ENCODE measurements at regions of chr22 and their contacts with region 1.

Region 1: DNA sequence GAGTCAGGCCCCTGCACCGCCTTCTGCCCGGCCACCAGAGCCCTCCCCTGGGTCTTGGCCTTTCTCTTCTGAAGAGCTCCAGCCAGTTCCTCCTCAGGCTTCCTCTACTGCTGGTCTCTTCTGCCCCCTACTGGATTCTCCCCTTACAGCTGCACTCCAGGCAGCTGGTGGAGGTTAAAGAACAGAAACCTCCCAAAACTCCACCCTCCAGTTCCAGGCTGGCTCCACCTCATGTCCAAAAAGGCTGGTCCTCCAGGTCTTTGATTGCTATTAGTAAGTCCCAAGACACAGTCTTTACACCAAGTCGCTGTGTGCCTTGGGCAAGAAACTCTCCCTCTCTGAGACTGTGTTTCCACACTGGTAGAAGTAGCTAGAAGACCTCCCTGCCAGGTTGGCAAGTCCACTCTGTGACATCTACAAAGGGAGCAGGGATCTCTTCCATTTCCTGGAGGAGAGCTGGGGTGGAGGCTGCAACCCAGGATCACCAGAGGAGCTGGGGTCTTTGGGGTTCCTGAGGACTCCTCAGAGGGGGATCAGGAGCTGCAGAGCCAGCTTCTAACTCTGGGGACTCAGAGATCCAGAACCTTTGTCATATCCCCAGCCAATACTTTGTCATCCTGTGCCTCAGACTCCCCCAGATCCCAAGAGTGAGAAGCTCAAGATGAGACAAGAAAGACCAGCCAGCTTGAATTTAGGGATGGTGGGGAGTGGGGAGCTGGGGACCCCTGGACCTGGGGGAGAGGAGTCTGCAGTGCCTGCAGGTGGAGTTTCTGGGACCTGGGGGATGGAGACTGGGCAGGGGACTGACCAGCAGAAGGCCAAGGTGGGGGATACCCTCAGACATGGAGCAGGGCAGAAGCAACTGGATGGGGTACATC is 3.4 kb upstream of the IGLL5 start:
- H3K4me3 ChIP-seq: no peak overlapping the region
- H3K27ac ChIP-seq: no peak overlapping the region
- H3K4me1 ChIP-seq: no peaks in the 10 kb centered on the region
- CTCF ChIP-seq: peak; percentile 48

Region 2: DNA sequence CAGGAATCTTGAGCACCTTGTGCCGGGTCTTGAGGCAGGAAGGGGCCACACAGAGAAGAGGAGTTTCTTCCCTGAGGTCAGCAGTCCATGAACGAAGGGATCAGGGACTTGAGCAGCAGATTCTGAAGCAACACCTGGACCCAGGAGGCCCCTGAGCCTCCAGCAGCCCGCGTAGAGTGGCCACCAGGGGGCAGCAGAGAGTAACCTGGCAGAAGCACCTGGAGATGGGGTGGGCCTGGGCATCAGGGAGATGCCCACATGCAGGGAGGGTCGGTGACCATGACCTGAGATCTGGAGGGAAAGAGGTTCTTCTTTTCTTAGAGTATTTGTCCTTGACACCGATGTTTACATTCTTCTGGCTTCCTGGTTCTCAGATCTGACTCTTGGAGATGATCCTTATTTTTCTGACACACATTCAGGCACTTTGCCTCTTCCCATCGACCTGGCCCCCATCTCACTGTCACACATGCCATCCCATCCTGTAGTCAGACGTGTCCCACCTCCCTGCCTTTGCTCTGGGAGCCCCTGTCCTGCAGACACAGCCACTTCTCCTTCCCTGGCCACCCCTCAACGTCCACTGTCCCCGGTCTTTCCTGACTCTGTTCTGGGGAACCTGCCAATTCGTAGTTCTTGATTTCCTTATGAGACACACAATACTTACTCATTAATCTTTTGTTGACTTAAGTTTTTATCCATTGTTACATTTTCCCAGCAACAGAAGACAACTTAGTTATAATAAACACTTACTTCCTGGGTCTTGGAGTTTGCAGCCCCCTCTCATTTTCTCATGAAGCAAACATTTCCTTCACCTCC is 173.3 kb before region 1 on chr22:
- CTCF ChIA-PET with region 1: interaction called, 29 read pairs
- POLR2A ChIA-PET with region 1: no interaction called
- H3K4me3 ChIP-seq: no peak overlapping the region
- H3K27ac ChIP-seq: no peak overlapping the region
- H3K4me1 ChIP-seq: no peaks in the 10 kb centered on the region
- CTCF ChIP-seq: peak; percentile 56; the same call in 1 of the 2 replicates

Region 3: DNA sequence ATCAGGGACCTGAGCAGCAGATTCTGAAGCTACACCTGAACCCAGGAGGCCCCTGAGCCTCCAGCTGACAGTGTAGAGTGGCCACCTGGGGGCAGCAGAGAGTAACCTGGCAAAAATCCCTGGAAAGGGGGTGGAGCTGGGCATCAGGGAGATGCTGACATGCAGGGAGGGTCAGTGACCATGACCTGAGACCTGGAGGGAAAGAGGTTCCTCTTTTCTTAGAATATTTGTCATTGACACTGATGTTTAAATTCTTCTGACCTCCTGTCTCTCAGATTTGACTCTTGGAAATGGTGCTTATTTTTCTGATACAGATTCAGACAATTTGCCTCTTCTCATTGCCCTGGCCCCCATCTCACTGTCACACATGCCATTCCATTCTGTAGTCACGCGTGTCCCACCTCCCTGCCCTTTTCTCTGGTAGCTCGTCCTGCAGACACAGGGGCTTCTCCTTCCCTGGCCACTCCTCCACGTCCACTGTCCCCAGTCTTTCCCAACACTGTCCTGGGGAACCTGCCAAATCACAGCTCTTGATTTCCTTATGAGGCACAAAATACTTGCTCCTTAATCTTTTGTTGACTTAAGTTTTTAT is 113.9 kb before region 1 on chr22:
- CTCF ChIA-PET with region 1: interaction called, 77 read pairs
- POLR2A ChIA-PET with region 1: interaction called, 3 read pairs
- H3K4me3 ChIP-seq: no peak overlapping the region
- H3K27ac ChIP-seq: no peak overlapping the region
- H3K4me1 ChIP-seq: no peaks in the 10 kb centered on the region
- CTCF ChIP-seq: peak; percentile 56

Region 4: DNA sequence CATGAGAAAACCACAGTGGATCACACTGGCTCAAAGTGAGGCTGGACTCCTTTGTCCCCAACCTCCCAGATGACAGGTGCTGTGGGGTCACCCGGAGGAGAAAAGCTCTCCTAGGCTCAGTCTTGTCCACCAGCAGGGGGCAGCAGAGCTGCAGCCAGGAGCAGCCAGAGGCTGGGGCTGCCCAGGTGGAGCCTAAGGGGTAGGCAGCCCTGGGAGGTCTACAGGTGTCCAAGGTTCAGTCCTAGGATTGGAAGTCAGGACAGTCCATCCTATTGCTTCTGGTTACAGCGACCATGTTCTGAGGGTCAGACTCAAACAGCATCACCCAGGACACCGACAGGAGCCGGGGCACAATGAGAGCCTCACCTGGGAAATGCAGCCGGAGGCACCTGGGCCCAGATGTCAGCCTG is 74.2 kb before region 1 on chr22:
- CTCF ChIA-PET with region 1: interaction called, 29 read pairs
- POLR2A ChIA-PET with region 1: no interaction called
- H3K4me3 ChIP-seq: no peak overlapping the region
- H3K27ac ChIP-seq: no peak overlapping the region
- H3K4me1 ChIP-seq: no peaks in the 10 kb centered on the region
- CTCF ChIP-seq: 0 out of 2 replicates have a peak, but pooled peaks have one; percentile 19

Region 5: GRCh38 chr22:22865311-22866072 is 18.8 kb before region 1 on chr22:
- CTCF ChIA-PET with region 1: interaction called, 12 read pairs
- POLR2A ChIA-PET with region 1: no interaction called
- H3K4me3 ChIP-seq: no peak overlapping the region
- H3K27ac ChIP-seq: no peak overlapping the region
- H3K4me1 ChIP-seq: no peaks in the 10 kb centered on the region
- CTCF ChIP-seq: no peak

Region 6: DNA sequence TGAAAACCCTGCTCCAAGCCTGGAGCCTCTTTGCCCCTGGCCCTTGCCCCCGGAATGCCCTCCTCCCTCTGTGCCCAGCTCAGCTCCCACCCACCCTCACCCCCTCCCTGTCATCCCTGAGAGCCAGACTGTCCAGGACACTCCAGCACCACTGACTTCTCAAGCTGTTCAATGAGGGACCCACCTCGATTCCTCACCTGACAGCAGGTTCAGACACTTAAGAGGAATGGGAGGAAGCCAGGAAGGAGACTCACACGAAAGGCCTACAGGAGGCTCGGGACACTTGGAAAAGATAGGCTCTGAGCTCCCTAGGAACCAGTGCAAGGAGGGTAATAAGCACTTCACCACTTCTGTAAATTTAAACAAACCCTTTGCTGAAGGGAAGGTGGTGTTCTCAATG is 39.1 kb after region 1 on chr22:
- CTCF ChIA-PET with region 1: no interaction called
- POLR2A ChIA-PET with region 1: no interaction called
- H3K4me3 ChIP-seq: no peak overlapping the region
- H3K27ac ChIP-seq: no peak overlapping the region
- H3K4me1 ChIP-seq: no peaks in the 10 kb centered on the region
- CTCF ChIP-seq: no peak

Region 7: GRCh38 chr22:22942511-22943329 is 58.5 kb after region 1 on chr22:
- CTCF ChIA-PET with region 1: interaction called, 12 read pairs
- POLR2A ChIA-PET with region 1: no interaction called
- H3K4me3 ChIP-seq: no peak overlapping the region
- H3K27ac ChIP-seq: no peak overlapping the region
- H3K4me1 ChIP-seq: no peaks in the 10 kb centered on the region
- CTCF ChIP-seq: peak; percentile 89

Measured in HEK293 (cell line).